GM12878 (cell line): ENCODE measurements at regions of chr6 and their contacts with region 1.

Region 1: GRCh38 chr6:84581494-84582259 is 182.7 kb downstream of the TBX18 start:
- DNase-seq: no peak
- ATAC-seq: peak; percentile 94
- H3K4me3 ChIP-seq: no peak overlapping the region
- H3K27ac ChIP-seq: no peak overlapping the region
- H3K4me1 ChIP-seq: no peaks in the 10 kb centered on the region
- H3K27me3 ChIP-seq: no peaks in the 10 kb centered on the region; a peak in 1 of 4 replicates
- CTCF ChIP-seq: no peak
- EP300 ChIP-seq: peak; percentile 33 to 62; a peak in 2 of 4 replicates
- POLR2A ChIP-seq: no peak
- RAD21 ChIP-seq: no peak

Region 2: DNA sequence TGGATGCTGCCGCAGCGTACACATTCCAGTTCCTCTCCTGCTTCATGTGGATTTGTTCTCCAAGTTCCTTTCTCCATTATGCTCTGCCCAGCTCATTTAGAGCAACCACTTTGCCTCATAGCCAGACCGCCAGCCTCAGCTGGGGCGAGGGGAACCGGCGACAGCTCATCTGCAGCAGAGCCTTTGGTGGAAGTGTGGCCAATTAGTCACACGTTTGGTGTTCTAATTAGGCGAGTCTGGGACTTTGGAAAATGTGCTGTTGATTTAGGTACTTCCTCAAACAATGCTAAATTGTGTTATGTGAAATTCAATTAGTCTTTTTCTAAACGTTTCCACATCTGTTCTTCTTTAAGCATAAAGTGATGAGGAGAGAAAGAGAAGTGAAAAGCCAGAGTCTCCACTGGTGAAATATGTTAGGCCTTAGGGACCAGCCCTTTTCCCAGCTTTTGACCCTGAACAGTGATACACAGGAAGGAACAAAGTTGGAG is 35.2 kb before region 1 on chr6:
- CTCF ChIA-PET with region 1: interaction called, 5 read pairs
- POLR2A ChIA-PET with region 1: no interaction called
- RAD21 ChIA-PET with region 1: interaction called, 15 read pairs
- SMC1A ChIA-PET with region 1: interaction called, 40 read pairs
- in situ Hi-C with region 1: no loop called
- intact Hi-C with region 1: loop called (anchors 2 kb)
- DNase-seq: peak; percentile 52
- ATAC-seq: peak; percentile 87
- H3K4me3 ChIP-seq: no peak overlapping the region
- H3K27ac ChIP-seq: no peak overlapping the region
- H3K4me1 ChIP-seq: no peaks in the 10 kb centered on the region
- H3K27me3 ChIP-seq: no peaks in the 10 kb centered on the region
- CTCF ChIP-seq: no peak
- EP300 ChIP-seq: peak; percentile 84 to 90
- POLR2A ChIP-seq: no peak
- RAD21 ChIP-seq: no peak

Region 3: GRCh38 chr6:84675651-84676050 is 94.0 kb after region 1 on chr6:
- CTCF ChIA-PET with region 1: no interaction called
- POLR2A ChIA-PET with region 1: no interaction called
- RAD21 ChIA-PET with region 1: no interaction called
- SMC1A ChIA-PET with region 1: no interaction called
- in situ Hi-C with region 1: no loop called
- intact Hi-C with region 1: loop called (anchors 5 kb)
- DNase-seq: no peak
- ATAC-seq: no peak
- H3K4me3 ChIP-seq: no peak overlapping the region
- H3K27ac ChIP-seq: no peak overlapping the region
- H3K4me1 ChIP-seq: no peaks in the 10 kb centered on the region
- H3K27me3 ChIP-seq: no peaks in the 10 kb centered on the region
- CTCF ChIP-seq: no peak
- EP300 ChIP-seq: no peak
- POLR2A ChIP-seq: no peak
- RAD21 ChIP-seq: no peak

Region 4: DNA sequence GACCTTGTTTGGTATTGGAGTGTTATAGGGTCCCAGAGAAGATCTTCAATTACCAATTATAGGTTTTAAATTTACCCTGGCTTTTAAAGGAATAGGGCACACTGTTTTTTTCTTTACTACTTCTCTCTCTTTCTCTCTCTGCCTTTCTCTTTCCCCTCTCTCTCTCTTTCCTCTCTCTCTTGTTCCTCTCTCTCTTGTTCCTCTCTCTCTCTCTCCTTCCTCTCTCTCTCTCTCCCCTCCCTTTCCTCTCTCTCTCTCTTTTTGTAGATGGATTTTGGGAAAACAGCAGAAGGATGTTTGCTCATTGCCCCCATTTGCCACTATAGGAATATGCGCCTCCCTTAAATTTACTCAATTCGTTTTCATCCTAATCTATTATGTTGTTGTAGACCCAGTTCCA is 137.5 kb after region 1 on chr6:
- CTCF ChIA-PET with region 1: no interaction called
- POLR2A ChIA-PET with region 1: no interaction called
- RAD21 ChIA-PET with region 1: no interaction called
- SMC1A ChIA-PET with region 1: no interaction called
- in situ Hi-C with region 1: no loop called
- intact Hi-C with region 1: no loop called
- DNase-seq: no peak
- ATAC-seq: no peak
- H3K4me3 ChIP-seq: no peak overlapping the region
- H3K27ac ChIP-seq: no peak overlapping the region
- H3K4me1 ChIP-seq: no peaks in the 10 kb centered on the region
- H3K27me3 ChIP-seq: no peaks in the 10 kb centered on the region
- CTCF ChIP-seq: no peak
- EP300 ChIP-seq: no peak
- POLR2A ChIP-seq: no peak
- RAD21 ChIP-seq: no peak